Common myeloid progenitor, CD34-positive (primary cell): ENCODE measurements at regions of chr3 and their contacts with region 1.

Region 1: DNA sequence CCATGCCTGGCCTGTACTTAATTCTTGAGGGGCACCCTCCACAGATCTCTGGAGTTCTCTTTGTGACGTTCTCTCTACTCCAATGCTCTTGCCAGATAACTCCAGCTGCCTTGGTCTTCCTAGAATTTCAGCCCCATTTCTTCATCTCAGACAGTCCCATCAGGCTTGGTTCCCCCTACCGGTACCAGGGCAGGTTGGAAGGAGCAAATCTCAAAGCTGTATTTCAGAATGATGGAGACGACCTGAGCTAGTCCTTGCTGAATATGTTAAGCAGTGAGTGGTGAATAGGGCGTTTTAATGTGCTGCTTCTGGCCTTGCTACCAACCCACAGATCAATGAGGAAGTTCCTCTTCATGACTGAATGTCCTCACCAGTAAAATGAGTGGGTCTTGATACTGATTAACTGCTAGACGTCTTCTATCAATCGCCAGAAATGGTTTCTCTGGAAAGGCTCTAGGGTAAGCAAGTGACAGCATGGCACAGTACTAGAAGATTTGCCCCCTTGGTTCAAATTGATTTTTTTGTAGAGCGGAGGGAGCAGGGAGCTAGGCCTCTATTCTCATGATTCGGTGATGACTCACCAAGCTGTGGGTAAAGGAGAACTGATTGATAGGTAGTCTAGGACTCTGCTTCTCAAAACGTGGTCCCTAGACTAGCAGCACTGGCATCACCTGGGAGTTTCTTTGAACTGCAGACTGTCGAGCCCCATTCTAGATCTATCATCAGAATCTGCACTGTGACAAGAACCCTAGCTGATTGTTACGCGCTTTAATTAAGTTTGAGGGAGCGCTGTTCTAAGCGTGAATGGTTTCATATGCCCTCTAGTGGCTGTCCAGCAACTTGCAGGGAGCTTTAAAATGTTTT is 67.8 kb downstream of the UBP1 start:
- DNase-seq: peak; percentile 50 to 80 (median 67)
- H3K4me3 ChIP-seq: peak overlapping the region in 1 of 7 experiments; percentile 6
- H3K27ac ChIP-seq: no peak overlapping the region
- H3K4me1 ChIP-seq: no peaks in the 10 kb centered on the region
- H3K27me3 ChIP-seq: no peaks in the 10 kb centered on the region

Region 2: DNA sequence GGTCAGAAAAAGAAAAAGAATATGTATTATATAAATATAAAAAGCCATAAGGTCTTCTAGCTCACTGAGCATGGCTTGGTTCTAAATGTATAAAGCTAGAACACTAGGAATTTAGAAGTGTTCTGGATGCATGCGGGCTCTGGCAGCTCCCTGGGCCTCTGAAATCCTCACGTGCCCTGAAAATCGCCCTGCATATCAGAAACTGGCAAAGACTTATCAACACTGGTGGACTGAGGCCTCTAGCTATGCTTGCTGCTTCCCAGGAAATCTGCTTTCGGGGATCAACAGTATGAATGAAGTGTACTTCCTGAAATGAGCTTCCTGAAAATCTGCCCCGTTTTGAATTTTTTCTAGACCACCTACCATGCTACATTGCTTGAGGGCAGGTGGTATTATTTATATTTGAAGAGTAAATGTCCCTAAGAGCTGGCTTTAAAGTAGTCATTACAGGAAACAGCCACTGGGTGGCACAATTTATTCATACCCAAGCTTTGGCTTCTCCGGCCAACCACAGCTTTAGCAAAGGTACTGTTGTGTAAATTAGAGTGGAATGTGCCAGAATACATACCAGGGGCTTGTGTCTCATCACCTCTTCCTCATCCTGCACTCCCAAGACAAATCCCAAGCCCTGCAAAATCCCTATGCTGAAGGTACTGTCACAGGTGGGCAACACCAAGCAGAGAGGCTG is 241.0 kb before region 1 on chr3:
- CTCF ChIA-PET with region 1: interaction called, 69 read pairs
- POLR2A ChIA-PET with region 1: no interaction called
- DNase-seq: peak; percentile 56 to 75 (median 68)
- H3K4me3 ChIP-seq: no peak overlapping the region
- H3K27ac ChIP-seq: no peak overlapping the region
- H3K4me1 ChIP-seq: no peaks in the 10 kb centered on the region
- H3K27me3 ChIP-seq: no peaks in the 10 kb centered on the region

Region 3: GRCh38 chr3:33184863-33185262 is 187.6 kb before region 1 on chr3:
- CTCF ChIA-PET with region 1: no interaction called
- POLR2A ChIA-PET with region 1: no interaction called
- DNase-seq: no peak
- H3K4me3 ChIP-seq: no peak overlapping the region
- H3K27ac ChIP-seq: no peak overlapping the region
- H3K4me1 ChIP-seq: no peaks in the 10 kb centered on the region
- H3K27me3 ChIP-seq: no peaks in the 10 kb centered on the region

Region 4: GRCh38 chr3:33360136-33360825 is 12.2 kb before region 1 on chr3:
- CTCF ChIA-PET with region 1: interaction called, 12 read pairs
- POLR2A ChIA-PET with region 1: no interaction called
- DNase-seq: no peak
- H3K4me3 ChIP-seq: no peak overlapping the region
- H3K27ac ChIP-seq: no peak overlapping the region
- H3K4me1 ChIP-seq: no peaks in the 10 kb centered on the region
- H3K27me3 ChIP-seq: no peaks in the 10 kb centered on the region

Region 5: GRCh38 chr3:33385423-33385822 is 13.0 kb after region 1 on chr3:
- CTCF ChIA-PET with region 1: interaction called, 23 read pairs
- POLR2A ChIA-PET with region 1: no interaction called
- DNase-seq: peak; percentile 33 to 70 (median 59)
- H3K4me3 ChIP-seq: no peak overlapping the region
- H3K27ac ChIP-seq: peak overlapping the region in 1 of 2 experiments; percentile 6
- H3K4me1 ChIP-seq: peaks cover 0 to 6% (median 1%) of the 10 kb centered on the region in 4 experiments
- H3K27me3 ChIP-seq: no peaks in the 10 kb centered on the region